ENCODE measurements at regions of chr16 and their contacts with region 1.

Region 1: GRCh38 chr16:27579087-27579980 is 29.4 kb downstream of the KATNIP start:
- DNase-seq: peak; percentile 54
- H3K4me3 ChIP-seq: no peak overlapping the region
- H3K27ac ChIP-seq: peak overlapping the region; percentile 34
- H3K4me1 ChIP-seq: peaks cover 21% of the 10 kb centered on the region
- H3K27me3 ChIP-seq: no peaks in the 10 kb centered on the region
- CTCF ChIP-seq: no peak

Region 2: DNA sequence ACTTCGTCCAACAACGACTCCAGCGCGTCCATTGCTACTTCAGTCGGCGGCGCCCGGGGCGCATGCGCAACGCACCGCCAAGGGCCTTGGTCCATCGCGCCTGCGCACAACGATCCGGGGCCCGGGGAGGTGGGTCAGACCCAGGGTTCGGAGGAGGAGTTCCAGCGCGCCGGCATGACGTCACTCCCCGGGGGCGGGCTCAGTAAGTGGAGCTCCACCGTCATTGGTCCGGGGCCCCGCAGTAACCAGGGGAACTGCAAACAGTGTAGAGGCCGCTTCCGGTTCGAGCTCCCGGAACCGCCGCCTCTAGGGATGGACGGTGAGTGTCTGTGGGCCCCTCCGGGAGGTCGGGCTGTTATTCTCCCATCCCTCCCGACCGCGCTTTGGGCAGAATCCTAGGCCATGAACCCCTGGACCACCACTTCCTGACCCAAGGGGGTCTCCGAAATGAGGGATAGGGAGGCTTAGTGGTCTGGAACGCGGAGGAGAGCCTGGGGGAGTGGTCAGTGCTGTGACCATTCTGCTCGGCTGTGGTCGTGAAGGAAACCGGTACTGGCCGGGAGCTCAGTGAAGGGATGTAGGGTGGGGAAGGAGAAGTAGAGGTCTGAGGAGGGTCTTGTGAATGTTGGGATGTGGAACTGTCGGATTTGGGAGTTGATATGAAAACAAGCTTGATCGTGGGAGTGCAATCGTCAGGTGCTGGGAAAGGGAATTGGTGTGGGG is 29.3 kb before region 1 on chr16 and contains the starts of genes GTF3C1 and KATNIP:
- CTCF ChIA-PET with region 1: no interaction called
- dilution Hi-C with region 1: no loop called
- in situ Hi-C with region 1: no loop called
- intact Hi-C with region 1: loop called (anchors 1 kb)
- DNase-seq: peak; percentile 98
- H3K4me3 ChIP-seq: peak within 1 kb of the TSS; percentile 72 to 99 (median 79)
- H3K27ac ChIP-seq: peak within 1 kb of the TSS; percentile 91
- H3K4me1 ChIP-seq: peaks cover 19% of the 10 kb centered on the region
- H3K27me3 ChIP-seq: no peaks in the 10 kb centered on the region
- CTCF ChIP-seq: no peak
- total RNA-seq, gene GTF3C1: 75.8 to 78.3 TPM
- total RNA-seq, gene KATNIP: 22.6 to 31.2 TPM

Measured in mammary epithelial cell (primary cell).